ENCODE measurements at regions of chr7 and their contacts with region 1.

Region 1: GRCh38 chr7:106978425-106979420 is 65.8 kb upstream of the PRKAR2B start:
- DNase-seq: no peak
- ATAC-seq: no peak
- H3K4me3 ChIP-seq: no peak overlapping the region
- H3K27ac ChIP-seq: no peak overlapping the region
- H3K4me1 ChIP-seq: peaks cover 2% of the 10 kb centered on the region; the same call in 1 of the 2 replicates
- H3K27me3 ChIP-seq: no peaks in the 10 kb centered on the region; the same call in 1 of the 2 replicates
- CTCF ChIP-seq: no peak
- POLR2A ChIP-seq: no peak
- RAD21 ChIP-seq: no peak

Region 2: DNA sequence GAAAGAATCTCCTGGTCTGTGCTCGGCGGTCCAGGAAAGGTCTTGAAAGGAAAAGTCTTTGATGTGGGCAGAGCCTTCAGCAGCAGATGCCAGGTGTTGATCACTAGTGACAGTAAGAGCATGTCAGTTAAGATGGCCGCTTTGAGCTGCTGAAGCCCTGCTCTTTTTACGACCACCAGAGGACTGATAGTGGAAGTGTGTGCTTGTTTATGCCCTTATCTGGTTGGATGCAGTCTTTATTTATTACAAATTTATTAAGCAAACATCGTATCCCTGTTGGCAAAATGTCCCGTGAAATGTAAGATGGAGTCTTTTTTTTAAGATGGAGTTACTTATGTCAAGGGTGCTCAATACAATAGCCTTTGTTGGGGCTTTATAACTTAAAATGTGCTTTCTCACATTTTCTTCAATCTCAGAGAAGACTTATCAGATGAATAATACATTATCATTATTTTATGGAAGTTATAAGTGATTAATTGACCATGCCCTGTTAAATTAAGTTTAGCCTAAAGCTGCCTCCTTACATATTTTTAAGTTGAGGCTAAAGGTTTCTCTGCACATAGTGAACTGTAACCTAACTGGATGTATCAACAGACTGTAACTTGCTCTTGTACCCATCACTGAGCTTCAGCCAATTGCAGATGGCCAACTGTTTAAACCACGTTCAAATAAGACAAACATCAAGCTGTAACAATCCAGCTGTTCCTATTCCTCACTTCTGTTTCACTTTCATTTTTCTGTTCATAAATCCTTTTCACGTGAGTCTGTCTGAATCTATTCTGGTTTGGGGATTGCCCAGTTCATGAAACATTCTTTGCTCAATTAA is 211.0 kb before region 1 on chr7:
- CTCF ChIA-PET with region 1: no interaction called
- POLR2A ChIA-PET with region 1: interaction called, 13 read pairs
- dilution Hi-C with region 1: no loop called
- in situ Hi-C with region 1: no loop called
- intact Hi-C with region 1: no loop called
- DNase-seq: peak; percentile 90
- ATAC-seq: peak; percentile 70
- H3K4me3 ChIP-seq: peak overlapping the region; percentile 17; the same call in 1 of the 2 replicates
- H3K27ac ChIP-seq: peak overlapping the region; percentile 85
- H3K4me1 ChIP-seq: peaks cover 26% of the 10 kb centered on the region
- H3K27me3 ChIP-seq: no peaks in the 10 kb centered on the region
- CTCF ChIP-seq: no peak
- POLR2A ChIP-seq: no peak
- RAD21 ChIP-seq: no peak

Region 3: DNA sequence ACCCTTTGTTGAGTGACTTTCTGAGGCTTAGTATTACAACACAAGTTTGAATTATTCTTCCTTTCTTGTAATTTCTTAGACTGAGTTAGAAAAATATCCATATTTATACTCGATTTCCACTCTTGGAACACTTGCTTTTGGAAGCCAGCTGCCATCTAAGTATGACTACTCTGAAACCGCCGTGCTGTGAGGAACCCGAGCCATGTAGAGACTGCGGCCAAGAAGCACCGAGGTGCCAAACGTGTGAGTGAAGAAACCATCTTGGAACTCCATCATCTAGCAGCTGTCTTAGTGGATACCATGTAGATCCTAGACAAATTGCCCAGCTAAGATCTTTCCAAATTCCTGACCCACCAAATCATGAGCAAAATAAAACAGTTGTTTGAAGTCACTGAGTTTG is 16.1 kb after region 1 on chr7:
- CTCF ChIA-PET with region 1: no interaction called
- POLR2A ChIA-PET with region 1: no interaction called
- dilution Hi-C with region 1: no loop called
- in situ Hi-C with region 1: no loop called
- intact Hi-C with region 1: loop called (anchors 1 kb)
- DNase-seq: no peak
- ATAC-seq: no peak
- H3K4me3 ChIP-seq: no peak overlapping the region
- H3K27ac ChIP-seq: no peak overlapping the region
- H3K4me1 ChIP-seq: no peaks in the 10 kb centered on the region
- H3K27me3 ChIP-seq: peaks cover 2% of the 10 kb centered on the region; the same call in 1 of the 2 replicates
- CTCF ChIP-seq: no peak
- POLR2A ChIP-seq: no peak
- RAD21 ChIP-seq: no peak

Measured in IMR-90 (cell line).